CD8-positive, alpha-beta memory T cell (primary cell): ENCODE measurements at regions of chr1 and their contacts with region 1.

Region 1: DNA sequence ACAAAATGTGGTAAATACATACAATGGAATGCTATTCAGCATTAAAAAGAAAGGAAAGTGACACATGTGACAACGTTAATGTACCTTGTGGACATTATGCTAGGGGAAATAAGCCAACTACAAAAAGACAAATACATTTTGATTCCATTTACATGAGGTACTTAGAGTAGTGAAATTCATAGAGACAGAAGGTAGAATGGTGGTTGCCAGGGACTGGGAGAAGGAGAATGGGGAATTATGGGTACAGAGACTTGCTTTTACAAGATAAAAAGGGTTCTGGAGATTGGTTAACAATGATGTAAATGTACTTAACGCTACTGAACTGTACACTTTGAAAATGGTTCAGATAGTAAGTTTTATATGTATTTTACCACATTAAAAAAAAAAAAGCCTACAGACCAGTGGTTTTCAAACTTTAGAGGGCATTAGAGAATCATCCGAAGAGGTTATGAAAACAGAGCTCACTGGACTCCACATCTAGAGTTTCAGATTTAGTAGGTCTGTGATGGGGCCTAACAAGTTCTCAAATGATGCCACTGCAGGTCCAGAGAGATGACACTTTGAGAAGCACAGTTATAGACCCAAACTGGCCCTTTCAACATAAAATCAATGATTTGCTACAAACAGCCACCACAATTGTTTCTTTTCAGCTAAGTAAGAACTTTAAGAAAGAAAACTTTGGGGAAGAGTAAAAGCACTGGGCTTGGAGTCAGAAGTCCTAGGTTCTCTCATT is 9.6 kb upstream of the ADCY10 start:
- DNase-seq: no peak
- H3K4me3 ChIP-seq: no peak overlapping the region
- H3K4me3 Mint-ChIP-seq: no peak overlapping the region
- H3K27ac ChIP-seq: no peak overlapping the region
- H3K27ac Mint-ChIP-seq: no peak overlapping the region
- H3K4me1 ChIP-seq: no peaks in the 10 kb centered on the region
- H3K4me1 Mint-ChIP-seq: peaks cover 11 to 29% (median 21%) of the 10 kb centered on the region in 3 donors
- H3K27me3 ChIP-seq: no peaks in the 10 kb centered on the region
- H3K27me3 Mint-ChIP-seq: no peaks in the 10 kb centered on the region

Region 2: GRCh38 chr1:167803358-167804207 is 119.9 kb before region 1 on chr1:
- CTCF ChIA-PET with region 1: no interaction called
- POLR2A ChIA-PET with region 1: no interaction called
- DNase-seq: peak; percentile 61 to 85 (median 70)
- H3K4me3 ChIP-seq: no peak overlapping the region
- H3K4me3 Mint-ChIP-seq: peak overlapping the region in 5 of 7 donors; percentile 38 to 69 (median 51)
- H3K27ac ChIP-seq: no peak overlapping the region
- H3K27ac Mint-ChIP-seq: peak overlapping the region in 7 of 8 donors; percentile 46 to 89 (median 81)
- H3K4me1 ChIP-seq: peaks cover 25% of the 10 kb centered on the region
- H3K4me1 Mint-ChIP-seq: peaks cover 24 to 30% (median 27%) of the 10 kb centered on the region in 3 donors
- H3K27me3 ChIP-seq: no peaks in the 10 kb centered on the region
- H3K27me3 Mint-ChIP-seq: peaks cover under 1 to 1% of the 10 kb centered on the region in 2 donors

Region 3: DNA sequence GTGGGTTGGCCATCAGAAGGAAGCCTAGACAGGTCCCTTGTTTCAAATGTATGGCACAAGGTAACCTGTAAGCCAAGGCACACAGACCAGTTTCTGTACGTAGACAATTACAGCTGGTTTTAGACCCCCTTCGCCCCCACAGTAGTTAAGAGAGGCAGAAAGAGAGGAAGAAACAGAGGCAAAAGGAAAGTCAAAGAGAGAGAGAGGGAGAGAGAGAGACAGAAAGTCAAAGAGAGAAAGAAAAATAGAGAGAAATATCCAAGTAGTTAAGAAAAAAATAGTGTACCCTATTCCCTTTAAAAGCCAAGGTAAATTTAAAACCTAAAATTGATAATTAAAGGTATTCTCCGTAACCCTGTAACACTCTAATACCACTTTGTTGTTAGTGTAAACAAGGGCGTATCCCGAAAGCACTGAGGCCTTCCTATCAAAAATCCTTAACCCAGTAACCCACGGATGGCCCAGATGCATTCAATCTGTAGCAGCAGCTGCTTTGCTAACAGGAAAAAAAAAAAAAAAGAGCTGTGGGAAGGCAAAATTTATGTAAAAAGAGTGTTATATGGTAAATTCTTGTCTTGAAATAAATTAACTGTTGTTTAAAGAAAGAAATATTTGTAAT is 59.0 kb before region 1 on chr1:
- CTCF ChIA-PET with region 1: no interaction called
- POLR2A ChIA-PET with region 1: interaction called, 11 read pairs
- DNase-seq: no peak
- H3K4me3 ChIP-seq: no peak overlapping the region
- H3K4me3 Mint-ChIP-seq: no peak overlapping the region
- H3K27ac ChIP-seq: peak overlapping the region; percentile 54
- H3K27ac Mint-ChIP-seq: no peak overlapping the region
- H3K4me1 ChIP-seq: no peaks in the 10 kb centered on the region
- H3K4me1 Mint-ChIP-seq: no peaks in the 10 kb centered on the region
- H3K27me3 ChIP-seq: no peaks in the 10 kb centered on the region
- H3K27me3 Mint-ChIP-seq: no peaks in the 10 kb centered on the region